ENCODE measurements at regions of chr5 and their contacts with region 1.

Region 1: GRCh38 chr5:52787600-52788504 is at the starts of genes ITGA1 and PELO:
- DNase-seq: peak; percentile 83
- ATAC-seq: peak; percentile 82
- H3K4me3 Mint-ChIP-seq: peak within 1 kb of the TSS; percentile 87
- H3K27ac Mint-ChIP-seq: peak within 1 kb of the TSS; percentile 87
- H3K4me1 Mint-ChIP-seq: peaks cover 47% of the 10 kb centered on the region
- H3K27me3 Mint-ChIP-seq: no peaks in the 10 kb centered on the region
- CTCF ChIP-seq: peak; percentile 33
- total RNA-seq, gene ITGA1: 5.1 to 6.0 TPM
- total RNA-seq, gene PELO: 25.4 to 26.0 TPM

Region 2: DNA sequence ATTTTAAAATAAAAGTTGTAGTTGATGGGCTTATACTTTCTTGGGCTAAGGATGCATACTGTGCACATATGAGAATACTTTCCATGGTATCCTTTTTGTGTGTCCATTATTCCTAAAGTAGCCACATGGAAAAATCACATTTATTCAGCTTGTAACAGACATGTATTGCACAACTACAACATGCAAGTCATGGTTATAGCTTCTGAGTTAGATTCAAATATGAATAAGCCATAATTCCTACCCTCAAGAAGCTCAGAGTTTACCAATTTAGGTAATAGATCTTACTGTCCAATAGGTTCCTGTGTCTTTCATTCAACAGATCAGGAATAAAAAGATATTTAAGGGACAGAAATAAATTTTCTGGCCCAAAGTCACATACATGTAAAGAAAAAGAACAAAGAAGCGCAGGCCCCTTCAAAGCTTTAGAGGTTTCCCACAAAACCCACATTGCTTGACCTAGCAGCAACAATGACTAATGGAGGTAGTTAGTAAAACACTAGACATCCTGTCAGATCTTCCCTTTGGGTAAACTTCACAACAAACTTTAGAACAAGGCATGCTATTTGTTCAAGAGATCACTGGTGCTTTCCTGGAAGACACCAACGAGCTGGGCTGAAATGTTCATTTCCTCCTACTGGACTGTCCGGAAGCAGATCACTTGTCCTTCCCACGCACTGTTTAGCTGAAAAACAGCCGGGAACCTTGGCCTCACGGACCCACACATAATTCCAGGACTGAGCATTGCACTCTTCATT is 78.5 kb before region 1 on chr5:
- CTCF ChIA-PET with region 1: no interaction called
- POLR2A ChIA-PET with region 1: no interaction called
- intact Hi-C with region 1: loop called (anchors 10 kb)
- DNase-seq: peak; percentile 63
- ATAC-seq: peak; percentile 82
- H3K4me3 Mint-ChIP-seq: no peak overlapping the region
- H3K27ac Mint-ChIP-seq: peak overlapping the region; percentile 34
- H3K4me1 Mint-ChIP-seq: peaks cover 49% of the 10 kb centered on the region
- H3K27me3 Mint-ChIP-seq: peaks cover 2% of the 10 kb centered on the region
- CTCF ChIP-seq: no peak

Region 3: GRCh38 chr5:52743970-52744369 is 43.9 kb before region 1 on chr5:
- CTCF ChIA-PET with region 1: interaction called, 3 read pairs
- POLR2A ChIA-PET with region 1: no interaction called
- intact Hi-C with region 1: loop called (anchors 5 kb)
- DNase-seq: peak; percentile 76
- ATAC-seq: peak; percentile 88
- H3K4me3 Mint-ChIP-seq: no peak overlapping the region
- H3K27ac Mint-ChIP-seq: peak overlapping the region; percentile 83
- H3K4me1 Mint-ChIP-seq: peaks cover 65% of the 10 kb centered on the region
- H3K27me3 Mint-ChIP-seq: no peaks in the 10 kb centered on the region
- CTCF ChIP-seq: no peak

Region 4: DNA sequence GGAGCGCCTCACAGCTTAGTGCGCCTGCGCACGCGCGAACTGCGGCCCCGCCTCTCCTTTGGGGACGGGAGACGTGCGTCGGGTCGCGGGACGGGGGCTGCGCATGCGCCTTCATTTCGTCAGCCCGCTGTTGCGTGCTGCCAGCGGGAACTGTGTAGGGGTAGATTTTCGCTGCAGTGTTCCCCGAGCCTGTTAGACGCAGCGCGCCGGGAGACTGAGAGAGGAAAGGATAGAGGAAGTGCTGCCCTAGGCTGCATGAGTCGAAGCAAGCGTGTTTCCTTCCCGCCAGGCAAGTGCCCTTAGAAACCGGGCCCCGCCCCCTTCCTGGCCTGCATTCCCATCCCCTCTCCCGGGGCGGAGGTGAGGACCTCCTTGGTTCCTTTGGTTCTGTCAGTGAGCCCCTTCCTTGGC is 12.1 kb after region 1 on chr5:
- CTCF ChIA-PET with region 1: interaction called, 14 read pairs
- POLR2A ChIA-PET with region 1: interaction called, 16 read pairs
- intact Hi-C with region 1: no loop called
- DNase-seq: peak; percentile 96
- ATAC-seq: peak; percentile 90
- H3K4me3 Mint-ChIP-seq: peak overlapping the region; percentile 97
- H3K27ac Mint-ChIP-seq: peak overlapping the region; percentile 97
- H3K4me1 Mint-ChIP-seq: peaks cover 44% of the 10 kb centered on the region
- H3K27me3 Mint-ChIP-seq: no peaks in the 10 kb centered on the region
- CTCF ChIP-seq: no peak

Region 5: GRCh38 chr5:52840277-52841050 is 52.6 kb after region 1 on chr5:
- CTCF ChIA-PET with region 1: no interaction called
- POLR2A ChIA-PET with region 1: no interaction called
- intact Hi-C with region 1: no loop called
- DNase-seq: no peak
- ATAC-seq: no peak
- H3K4me3 Mint-ChIP-seq: no peak overlapping the region
- H3K27ac Mint-ChIP-seq: no peak overlapping the region
- H3K4me1 Mint-ChIP-seq: peaks cover 11% of the 10 kb centered on the region
- H3K27me3 Mint-ChIP-seq: no peaks in the 10 kb centered on the region
- CTCF ChIP-seq: no peak

Region 6: GRCh38 chr5:52915176-52915875 is 127.5 kb after region 1 on chr5:
- CTCF ChIA-PET with region 1: interaction called, 13 read pairs
- POLR2A ChIA-PET with region 1: no interaction called
- intact Hi-C with region 1: loop called (anchors 5 kb)
- DNase-seq: peak; percentile 62
- ATAC-seq: peak; percentile 98
- H3K4me3 Mint-ChIP-seq: peak overlapping the region; percentile 55
- H3K27ac Mint-ChIP-seq: no peak overlapping the region
- H3K4me1 Mint-ChIP-seq: peaks cover 7% of the 10 kb centered on the region
- H3K27me3 Mint-ChIP-seq: no peaks in the 10 kb centered on the region
- CTCF ChIP-seq: peak; percentile 88

Region 7: GRCh38 chr5:53095931-53096525 is 308.2 kb after region 1 on chr5:
- CTCF ChIA-PET with region 1: no interaction called
- POLR2A ChIA-PET with region 1: no interaction called
- intact Hi-C with region 1: loop called (anchors 10 kb)
- DNase-seq: peak; percentile 86
- ATAC-seq: peak; percentile 88
- H3K4me3 Mint-ChIP-seq: no peak overlapping the region
- H3K27ac Mint-ChIP-seq: no peak overlapping the region
- H3K4me1 Mint-ChIP-seq: peaks cover 3% of the 10 kb centered on the region
- H3K27me3 Mint-ChIP-seq: no peaks in the 10 kb centered on the region
- CTCF ChIP-seq: peak; percentile 81